ENCODE measurements at regions of chr3 and their contacts with region 1.

Region 1: GRCh38 chr3:9362731-9363530 is at the start of gene THUMPD3:
- DNase-seq: peak; percentile 93
- ATAC-seq: peak; percentile 98
- H3K4me3 ChIP-seq: peak within 1 kb of the TSS; percentile 58 to 88 (median 76)
- H3K27ac ChIP-seq: peak within 1 kb of the TSS; percentile 98
- H3K4me1 ChIP-seq: peaks cover 36% of the 10 kb centered on the region
- H3K27me3 ChIP-seq: no peaks in the 10 kb centered on the region
- CTCF ChIP-seq: no peak
- EP300 ChIP-seq: no peak
- POLR2A ChIP-seq: peak; percentile 93 to 94
- RAD21 ChIP-seq: peak; percentile 45
- total RNA-seq, gene THUMPD3: 44.1 and 62.4 TPM in 2 replicates

Region 2: DNA sequence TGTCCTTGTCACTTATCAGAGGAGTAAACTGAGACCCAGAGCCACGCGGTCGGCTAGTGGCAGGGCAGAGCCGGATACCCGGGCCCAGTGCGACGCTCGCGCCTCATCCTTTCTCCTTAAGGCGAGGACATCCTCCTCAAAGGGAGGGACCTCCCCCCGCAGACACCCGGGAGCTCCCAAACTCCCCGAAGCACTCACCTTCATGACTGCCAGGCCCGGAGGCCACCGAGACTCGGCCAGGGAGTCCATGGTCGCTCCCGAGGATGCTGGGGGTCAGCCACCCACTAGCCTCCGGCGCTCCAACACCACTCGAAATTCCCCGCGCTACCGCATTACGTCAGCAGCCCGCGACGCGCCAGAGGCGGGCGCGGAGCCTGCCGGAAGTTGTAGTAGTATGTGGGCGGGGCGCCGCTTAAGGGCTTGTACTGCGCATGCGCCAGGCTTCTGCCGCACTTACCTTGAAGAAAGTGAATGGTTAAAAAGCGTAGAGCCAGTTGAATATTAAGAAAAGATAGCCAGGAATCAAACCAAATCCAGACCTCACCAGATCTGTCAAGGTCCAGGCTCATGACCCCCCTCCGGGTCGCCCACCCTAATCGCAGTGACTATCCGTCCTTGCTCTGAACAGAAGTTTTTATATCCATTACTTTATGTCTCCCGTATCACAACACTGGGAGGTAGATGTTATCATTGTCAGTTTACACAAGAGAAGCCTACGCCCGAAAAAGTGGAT is 399.6 kb before region 1 on chr3 and contains the start of gene RAD18:
- CTCF ChIA-PET with region 1: no interaction called
- POLR2A ChIA-PET with region 1: interaction called, 13 read pairs
- in situ Hi-C with region 1: no loop called
- intact Hi-C with region 1: no loop called
- DNase-seq: peak; percentile 83
- ATAC-seq: peak; percentile 77
- H3K4me3 ChIP-seq: peak within 1 kb of the TSS; percentile 60 to 100 (median 93)
- H3K27ac ChIP-seq: peak within 1 kb of the TSS; percentile 90
- H3K4me1 ChIP-seq: peaks cover 75% of the 10 kb centered on the region
- H3K27me3 ChIP-seq: no peaks in the 10 kb centered on the region; a peak in 1 of 5 replicates
- CTCF ChIP-seq: 0 out of 2 replicates have a peak, but pooled peaks have one; percentile 7
- EP300 ChIP-seq: 0 out of 4 replicates have a peak, but pooled peaks of 1 of the 2 experiments have one; percentile 55
- POLR2A ChIP-seq: peak; percentile 51 to 59; a peak in 3 of 4 replicates
- RAD21 ChIP-seq: 0 out of 2 replicates have a peak, but pooled peaks have one; percentile 23
- total RNA-seq, gene RAD18: 20.7 and 26.5 TPM in 2 replicates

Region 3: DNA sequence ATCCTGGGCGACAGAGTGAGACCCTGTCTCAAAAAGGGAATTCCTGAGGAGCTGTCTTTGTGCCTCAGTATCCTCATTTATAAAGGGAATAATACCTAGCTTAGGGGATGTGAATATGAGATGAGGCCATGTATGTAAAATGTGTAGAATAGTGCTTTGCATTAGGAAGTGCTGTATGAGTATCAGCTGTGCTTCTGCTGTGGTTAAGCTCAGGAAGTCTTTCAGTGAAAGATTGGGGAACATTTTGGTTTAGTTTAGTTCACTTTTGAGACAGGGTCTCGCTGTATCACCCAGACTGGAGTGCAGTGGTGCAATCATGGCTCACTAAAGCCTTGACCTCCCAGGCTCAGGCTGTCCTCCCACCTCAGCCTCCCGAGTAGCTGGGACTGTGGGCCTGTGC is 10.5 kb after region 1 on chr3:
- CTCF ChIA-PET with region 1: no interaction called
- POLR2A ChIA-PET with region 1: interaction called, 20 read pairs
- in situ Hi-C with region 1: no loop called
- intact Hi-C with region 1: no loop called
- DNase-seq: no peak
- ATAC-seq: no peak
- H3K4me3 ChIP-seq: no peak overlapping the region
- H3K27ac ChIP-seq: no peak overlapping the region
- H3K4me1 ChIP-seq: no peaks in the 10 kb centered on the region
- H3K27me3 ChIP-seq: no peaks in the 10 kb centered on the region
- CTCF ChIP-seq: no peak
- EP300 ChIP-seq: no peak
- POLR2A ChIP-seq: no peak
- RAD21 ChIP-seq: no peak

Region 4: GRCh38 chr3:9384141-9384853 is 21.4 kb after region 1 on chr3:
- CTCF ChIA-PET with region 1: no interaction called
- POLR2A ChIA-PET with region 1: interaction called, 20 read pairs
- in situ Hi-C with region 1: no loop called
- intact Hi-C with region 1: no loop called
- DNase-seq: no peak
- ATAC-seq: peak; percentile 19
- H3K4me3 ChIP-seq: no peak overlapping the region
- H3K27ac ChIP-seq: no peak overlapping the region
- H3K4me1 ChIP-seq: peaks cover 22% of the 10 kb centered on the region
- H3K27me3 ChIP-seq: no peaks in the 10 kb centered on the region
- CTCF ChIP-seq: no peak
- EP300 ChIP-seq: no peak
- POLR2A ChIP-seq: no peak; a peak in 2 of 4 replicates
- RAD21 ChIP-seq: no peak

Region 5: GRCh38 chr3:9396700-9397521 is 34.0 kb after region 1 on chr3:
- CTCF ChIA-PET with region 1: no interaction called
- POLR2A ChIA-PET with region 1: interaction called, 112 read pairs
- in situ Hi-C with region 1: no loop called
- intact Hi-C with region 1: loop called (anchors 1 kb)
- DNase-seq: peak; percentile 98
- ATAC-seq: peak; percentile 88
- H3K4me3 ChIP-seq: peak overlapping the region; percentile 91 to 95 (median 92); a peak in 5 of 6 replicates
- H3K27ac ChIP-seq: peak overlapping the region; percentile 93
- H3K4me1 ChIP-seq: peaks cover 60% of the 10 kb centered on the region
- H3K27me3 ChIP-seq: no peaks in the 10 kb centered on the region; a peak in 1 of 5 replicates
- CTCF ChIP-seq: 0 out of 2 replicates have a peak, but pooled peaks have one; percentile 4
- EP300 ChIP-seq: no peak
- POLR2A ChIP-seq: peak; percentile 85 to 97
- RAD21 ChIP-seq: no peak; the same call in 1 of the 2 replicates

Region 6: GRCh38 chr3:9402410-9403228 is 39.7 kb after region 1 on chr3:
- CTCF ChIA-PET with region 1: no interaction called
- POLR2A ChIA-PET with region 1: interaction called, 112 read pairs
- in situ Hi-C with region 1: no loop called
- intact Hi-C with region 1: loop called (anchors 1 kb)
- DNase-seq: peak; percentile 88
- ATAC-seq: peak; percentile 80
- H3K4me3 ChIP-seq: peak overlapping the region; percentile 47 to 100 (median 96)
- H3K27ac ChIP-seq: peak overlapping the region; percentile 59
- H3K4me1 ChIP-seq: peaks cover 78% of the 10 kb centered on the region
- H3K27me3 ChIP-seq: no peaks in the 10 kb centered on the region; a peak in 1 of 5 replicates
- CTCF ChIP-seq: no peak
- EP300 ChIP-seq: peak in 1 of 2 experiments; percentile 62; a peak in 2 of 4 replicates
- POLR2A ChIP-seq: no peak
- RAD21 ChIP-seq: 0 out of 2 replicates have a peak, but pooled peaks have one; percentile 23

Region 7: GRCh38 chr3:9422712-9423424 is 59.9 kb after region 1 on chr3:
- CTCF ChIA-PET with region 1: no interaction called
- POLR2A ChIA-PET with region 1: interaction called, 9 read pairs
- in situ Hi-C with region 1: no loop called
- intact Hi-C with region 1: loop called (anchors 1 kb)
- DNase-seq: peak; percentile 98
- ATAC-seq: peak; percentile 99
- H3K4me3 ChIP-seq: peak overlapping the region in 2 of 3 experiments; percentile 15 to 35; a peak in 3 of 6 replicates
- H3K27ac ChIP-seq: peak overlapping the region; percentile 60
- H3K4me1 ChIP-seq: peaks cover 89% of the 10 kb centered on the region
- H3K27me3 ChIP-seq: no peaks in the 10 kb centered on the region
- CTCF ChIP-seq: peak; percentile 40
- EP300 ChIP-seq: peak in 1 of 2 experiments; percentile 32; a peak in 2 of 4 replicates
- POLR2A ChIP-seq: peak; percentile 24 to 67; a peak in 2 of 4 replicates
- RAD21 ChIP-seq: peak; percentile 58

Measured in HepG2 (cell line).